GM12878 (cell line): ENCODE measurements at regions of chr22 and their contacts with region 1.

Region 1: DNA sequence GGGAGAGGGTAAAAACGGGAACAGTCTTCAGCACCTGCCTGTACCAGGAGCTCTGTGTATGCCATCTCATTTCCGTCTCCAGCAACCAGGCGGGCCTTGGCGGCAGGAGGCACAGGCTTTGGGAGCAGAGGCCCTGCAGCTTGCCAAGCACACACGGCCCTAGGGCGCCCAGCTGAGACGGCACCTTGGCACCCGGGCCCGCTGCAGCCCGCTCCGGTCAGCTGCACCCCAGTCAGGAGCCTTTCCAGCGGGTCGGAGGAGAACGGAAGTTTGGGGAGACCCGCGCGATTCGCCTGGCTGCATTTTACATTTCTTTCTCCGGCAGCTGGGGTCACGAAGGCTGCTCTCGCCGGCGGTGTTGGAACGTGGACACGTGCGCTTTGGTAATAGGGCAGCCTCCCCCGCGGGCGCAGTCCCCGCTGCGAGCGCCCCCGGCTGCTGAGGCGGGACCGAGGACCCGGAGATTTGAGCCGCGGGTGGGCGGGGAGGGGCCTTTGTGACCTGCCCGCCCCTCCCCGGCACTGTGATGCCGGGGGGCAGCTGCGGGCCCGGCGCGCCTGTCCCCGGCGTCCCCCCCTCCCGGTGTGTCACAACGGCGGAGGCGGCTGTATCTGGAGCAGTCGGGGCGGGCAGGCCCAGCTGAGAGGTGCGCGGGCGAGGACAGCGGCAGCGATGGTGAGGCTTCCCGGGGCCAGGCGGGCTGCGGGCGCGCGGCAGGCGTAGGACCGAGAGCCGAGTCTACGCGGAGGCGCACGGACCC is at the start of gene TUBA8:
- DNase-seq: no peak
- ATAC-seq: peak; percentile 64
- H3K4me3 ChIP-seq: peak within 1 kb of the TSS; percentile 65
- H3K27ac ChIP-seq: peak within 1 kb of the TSS; percentile 67
- H3K4me1 ChIP-seq: peaks cover 41% of the 10 kb centered on the region
- H3K27me3 ChIP-seq: no peaks in the 10 kb centered on the region; a peak in 1 of 4 replicates
- CTCF ChIP-seq: peak in 1 of 3 experiments; percentile 16; a peak in 1 of 6 replicates
- EP300 ChIP-seq: no peak
- POLR2A ChIP-seq: peak; percentile 73
- RAD21 ChIP-seq: 0 out of 2 replicates have a peak, but pooled peaks have one; percentile 8
- polyA plus RNA-seq, gene TUBA8: 2.2 to 5.5 TPM

Region 2: GRCh38 chr22:17938484-17938924 is 171.9 kb before region 1 on chr22:
- CTCF ChIA-PET with region 1: no interaction called
- POLR2A ChIA-PET with region 1: no interaction called
- RAD21 ChIA-PET with region 1: no interaction called
- SMC1A ChIA-PET with region 1: no interaction called
- in situ Hi-C with region 1: no loop called
- intact Hi-C with region 1: no loop called
- DNase-seq: no peak
- ATAC-seq: no peak
- H3K4me3 ChIP-seq: no peak overlapping the region
- H3K27ac ChIP-seq: no peak overlapping the region
- H3K4me1 ChIP-seq: peaks cover 16% of the 10 kb centered on the region
- H3K27me3 ChIP-seq: no peaks in the 10 kb centered on the region
- CTCF ChIP-seq: no peak
- EP300 ChIP-seq: no peak
- POLR2A ChIP-seq: no peak
- RAD21 ChIP-seq: no peak

Region 3: DNA sequence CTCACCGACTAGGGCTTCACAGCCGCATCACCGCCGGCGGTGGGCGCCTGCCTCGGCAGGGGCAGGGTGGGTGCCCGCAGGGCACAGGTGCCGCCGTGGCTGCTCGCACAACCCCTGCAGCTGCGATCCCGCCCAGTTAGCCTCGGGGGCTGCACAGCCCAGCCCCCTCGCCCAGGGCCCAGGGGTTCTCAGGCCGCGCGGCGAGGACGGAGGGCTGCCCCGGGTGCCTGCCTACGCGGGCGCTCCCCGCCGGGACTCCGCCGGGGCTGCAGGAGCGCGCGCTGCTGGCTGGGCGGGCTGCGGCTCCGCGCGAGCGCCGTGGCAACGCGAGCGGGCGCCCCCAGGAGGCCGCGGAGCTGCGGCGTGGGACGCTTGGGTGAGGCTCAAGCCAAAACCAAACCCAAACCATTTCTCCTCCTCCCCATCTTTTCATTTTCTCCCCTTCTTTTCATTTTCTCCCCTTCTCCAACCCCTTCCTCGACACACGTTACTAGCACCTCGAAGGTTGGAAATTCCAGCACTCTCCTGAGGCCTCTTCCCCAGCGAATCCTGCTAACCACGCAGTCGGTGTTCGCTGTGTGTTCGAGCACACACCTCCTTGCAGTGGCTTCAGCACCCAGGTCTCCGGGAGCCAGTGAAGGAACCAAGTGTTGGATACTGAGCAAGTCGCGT is 86.0 kb before region 1 on chr22 and contains the start of gene MICAL3:
- CTCF ChIA-PET with region 1: no interaction called
- POLR2A ChIA-PET with region 1: no interaction called
- RAD21 ChIA-PET with region 1: no interaction called
- SMC1A ChIA-PET with region 1: no interaction called
- in situ Hi-C with region 1: no loop called
- intact Hi-C with region 1: no loop called
- DNase-seq: no peak
- ATAC-seq: peak; percentile 96
- H3K4me3 ChIP-seq: peak within 1 kb of the TSS; percentile 79
- H3K27ac ChIP-seq: no peak within 1 kb of the TSS
- H3K4me1 ChIP-seq: peaks cover 7% of the 10 kb centered on the region
- H3K27me3 ChIP-seq: no peaks in the 10 kb centered on the region; a peak in 2 of 4 replicates
- CTCF ChIP-seq: peak; percentile 58 to 83 (median 76); a peak in 4 of 6 replicates
- EP300 ChIP-seq: no peak
- POLR2A ChIP-seq: no peak
- RAD21 ChIP-seq: peak; percentile 75
- polyA plus RNA-seq, gene MICAL3: 2.6 to 3.3 TPM

Region 4: GRCh38 chr22:18048066-18048898 is 62.1 kb before region 1 on chr22:
- CTCF ChIA-PET with region 1: no interaction called
- POLR2A ChIA-PET with region 1: no interaction called
- RAD21 ChIA-PET with region 1: no interaction called
- SMC1A ChIA-PET with region 1: no interaction called
- in situ Hi-C with region 1: no loop called
- intact Hi-C with region 1: no loop called
- DNase-seq: no peak
- ATAC-seq: no peak
- H3K4me3 ChIP-seq: no peak overlapping the region
- H3K27ac ChIP-seq: no peak overlapping the region
- H3K4me1 ChIP-seq: no peaks in the 10 kb centered on the region; the same call in 1 of the 2 replicates
- H3K27me3 ChIP-seq: no peaks in the 10 kb centered on the region
- CTCF ChIP-seq: no peak
- EP300 ChIP-seq: no peak
- POLR2A ChIP-seq: no peak
- RAD21 ChIP-seq: no peak

Region 5: DNA sequence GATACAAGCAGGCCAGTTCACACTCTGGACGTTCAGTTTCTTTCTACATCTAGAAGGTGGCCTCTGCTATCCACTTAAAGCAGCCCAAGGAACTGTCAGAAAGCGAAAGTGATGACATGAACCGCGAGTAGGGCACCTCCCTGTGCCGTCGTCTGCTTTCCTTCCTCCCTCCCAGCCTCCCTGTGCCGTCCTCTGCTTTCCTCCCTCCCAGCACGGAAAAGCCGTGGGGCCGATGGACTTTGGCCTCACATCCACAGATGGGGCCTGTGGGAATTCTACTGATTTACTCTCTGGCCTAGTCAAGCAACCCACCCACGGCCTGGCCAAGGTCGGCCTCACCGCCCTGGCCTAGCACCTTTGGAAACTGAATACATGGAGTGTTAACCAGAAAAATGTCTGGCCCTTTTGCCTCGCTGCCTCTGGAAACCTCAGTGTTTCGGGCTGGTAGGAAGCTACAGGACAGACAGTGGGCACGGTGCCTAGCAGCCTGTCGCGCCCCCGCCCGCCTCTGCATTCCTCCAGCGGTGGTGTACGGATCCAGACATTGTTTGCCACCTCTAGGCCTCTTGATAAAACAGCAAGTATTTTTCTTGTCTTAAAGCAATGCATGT is 18.4 kb before region 1 on chr22:
- CTCF ChIA-PET with region 1: interaction called, 8 read pairs
- POLR2A ChIA-PET with region 1: interaction called, 4 read pairs
- RAD21 ChIA-PET with region 1: interaction called, 17 read pairs
- SMC1A ChIA-PET with region 1: interaction called, 20 read pairs
- in situ Hi-C with region 1: no loop called
- intact Hi-C with region 1: loop called (anchors 1 kb)
- DNase-seq: no peak
- ATAC-seq: peak; percentile 64
- H3K4me3 ChIP-seq: peak overlapping the region; percentile 47; the same call in 1 of the 2 replicates
- H3K27ac ChIP-seq: peak overlapping the region; percentile 90
- H3K4me1 ChIP-seq: peaks cover 53% of the 10 kb centered on the region
- H3K27me3 ChIP-seq: no peaks in the 10 kb centered on the region
- CTCF ChIP-seq: no peak
- EP300 ChIP-seq: no peak
- POLR2A ChIP-seq: peak; percentile 54; the same call in 1 of the 2 replicates
- RAD21 ChIP-seq: no peak

Region 6: GRCh38 chr22:18136563-18137320 is 26.4 kb after region 1 on chr22:
- CTCF ChIA-PET with region 1: no interaction called
- POLR2A ChIA-PET with region 1: no interaction called
- RAD21 ChIA-PET with region 1: no interaction called
- SMC1A ChIA-PET with region 1: no interaction called
- in situ Hi-C with region 1: no loop called
- intact Hi-C with region 1: no loop called
- DNase-seq: no peak
- ATAC-seq: no peak
- H3K4me3 ChIP-seq: no peak overlapping the region
- H3K27ac ChIP-seq: no peak overlapping the region
- H3K4me1 ChIP-seq: no peaks in the 10 kb centered on the region
- H3K27me3 ChIP-seq: no peaks in the 10 kb centered on the region
- CTCF ChIP-seq: no peak
- EP300 ChIP-seq: no peak
- POLR2A ChIP-seq: no peak
- RAD21 ChIP-seq: no peak